ENCODE measurements at regions of chr6 and their contacts with region 1.

Region 1: GRCh38 chr6:152552616-152553209 is 84.4 kb downstream of the SYNE1 start:
- DNase-seq: peak; percentile 65 to 86 (median 76)
- ATAC-seq: peak; percentile 90 to 93
- H3K4me3 ChIP-seq: no peak overlapping the region
- H3K27ac ChIP-seq: no peak overlapping the region
- H3K4me1 ChIP-seq: no peaks in the 10 kb centered on the region
- H3K27me3 ChIP-seq: no peaks in the 10 kb centered on the region

Region 2: DNA sequence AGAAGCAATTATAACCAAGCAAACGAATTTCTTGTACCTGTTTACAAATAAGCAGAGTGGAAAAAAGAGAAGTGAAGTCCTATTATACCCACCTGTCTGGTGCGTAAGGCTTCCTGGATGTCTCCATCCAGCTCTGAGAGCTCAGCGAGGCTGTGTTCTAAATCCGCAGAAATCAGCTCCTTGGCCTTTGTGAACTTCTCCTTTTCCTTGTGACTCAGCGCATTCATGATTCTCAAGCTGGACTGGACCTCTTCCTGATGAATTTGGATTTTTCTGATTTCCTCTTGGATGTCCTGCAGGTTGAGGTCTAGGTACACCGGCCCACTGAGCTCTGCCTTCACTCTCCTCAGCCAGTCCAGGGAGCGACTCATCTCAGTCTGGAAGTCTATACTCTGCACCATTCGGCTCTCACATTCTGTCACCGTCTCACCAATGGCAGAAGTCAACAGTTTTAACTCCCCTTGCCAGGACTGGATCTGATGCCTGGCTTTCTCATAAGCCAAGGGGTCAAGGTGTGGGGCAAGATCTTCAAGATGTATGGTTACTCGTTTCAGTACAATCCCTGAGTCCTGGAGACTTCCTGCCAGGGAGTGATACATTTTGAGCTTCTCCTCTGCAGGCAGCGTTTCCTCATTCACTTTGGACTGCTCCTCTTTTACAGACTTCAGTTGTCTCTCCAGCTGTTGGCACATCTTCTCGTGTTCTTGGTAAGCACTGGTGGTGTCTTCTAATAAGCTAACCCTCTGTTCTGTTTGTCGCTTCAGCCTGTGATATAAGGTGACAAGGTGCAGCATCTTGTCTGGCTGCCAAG is 222.9 kb before region 1 on chr6:
- intact Hi-C with region 1: no loop called
- DNase-seq: no peak
- ATAC-seq: peak; percentile 32 to 45
- H3K4me3 ChIP-seq: no peak overlapping the region
- H3K27ac ChIP-seq: no peak overlapping the region
- H3K4me1 ChIP-seq: no peaks in the 10 kb centered on the region
- H3K27me3 ChIP-seq: no peaks in the 10 kb centered on the region

Region 3: DNA sequence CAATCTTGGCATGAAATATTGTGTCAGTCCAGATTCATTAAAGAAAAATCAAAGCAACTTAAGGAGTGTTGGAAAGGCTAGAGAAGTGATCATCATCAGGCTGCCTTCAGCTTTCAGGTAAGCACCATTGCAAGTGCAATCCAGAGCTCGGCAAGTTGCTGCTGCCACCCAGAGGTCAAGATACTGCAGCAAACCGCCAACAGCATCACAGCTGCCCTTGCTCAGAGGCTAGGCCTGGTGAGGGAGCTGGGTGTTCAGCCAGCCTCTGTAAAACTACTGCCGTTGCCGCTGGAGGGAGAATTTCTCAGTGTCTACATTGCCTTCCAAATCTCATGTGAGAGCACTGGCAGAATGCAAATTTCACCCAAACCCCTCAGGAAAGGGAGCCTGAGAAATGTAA is 90.3 kb after region 1 on chr6:
- intact Hi-C with region 1: loop called (anchors 2 to 10 kb)
- DNase-seq: peak; percentile 56 to 82 (median 74)
- ATAC-seq: peak; percentile 88 to 94
- H3K4me3 ChIP-seq: no peak overlapping the region
- H3K27ac ChIP-seq: no peak overlapping the region
- H3K4me1 ChIP-seq: no peaks in the 10 kb centered on the region
- H3K27me3 ChIP-seq: no peaks in the 10 kb centered on the region

Region 4: GRCh38 chr6:152669895-152670294 is 117.2 kb after region 1 on chr6:
- intact Hi-C with region 1: loop called in 1 of 4 experiments (anchors 10 kb)
- DNase-seq: no peak
- ATAC-seq: peak in 1 of 2 donors; percentile 62
- H3K4me3 ChIP-seq: no peak overlapping the region
- H3K27ac ChIP-seq: no peak overlapping the region
- H3K4me1 ChIP-seq: no peaks in the 10 kb centered on the region
- H3K27me3 ChIP-seq: no peaks in the 10 kb centered on the region